Activated CD4-positive, alpha-beta memory T cell treated with anti-CD3 and anti-CD28 coated beads for 36 hours (primary cell): ENCODE measurements at regions of chr11 and their contacts with region 1.

Region 1: DNA sequence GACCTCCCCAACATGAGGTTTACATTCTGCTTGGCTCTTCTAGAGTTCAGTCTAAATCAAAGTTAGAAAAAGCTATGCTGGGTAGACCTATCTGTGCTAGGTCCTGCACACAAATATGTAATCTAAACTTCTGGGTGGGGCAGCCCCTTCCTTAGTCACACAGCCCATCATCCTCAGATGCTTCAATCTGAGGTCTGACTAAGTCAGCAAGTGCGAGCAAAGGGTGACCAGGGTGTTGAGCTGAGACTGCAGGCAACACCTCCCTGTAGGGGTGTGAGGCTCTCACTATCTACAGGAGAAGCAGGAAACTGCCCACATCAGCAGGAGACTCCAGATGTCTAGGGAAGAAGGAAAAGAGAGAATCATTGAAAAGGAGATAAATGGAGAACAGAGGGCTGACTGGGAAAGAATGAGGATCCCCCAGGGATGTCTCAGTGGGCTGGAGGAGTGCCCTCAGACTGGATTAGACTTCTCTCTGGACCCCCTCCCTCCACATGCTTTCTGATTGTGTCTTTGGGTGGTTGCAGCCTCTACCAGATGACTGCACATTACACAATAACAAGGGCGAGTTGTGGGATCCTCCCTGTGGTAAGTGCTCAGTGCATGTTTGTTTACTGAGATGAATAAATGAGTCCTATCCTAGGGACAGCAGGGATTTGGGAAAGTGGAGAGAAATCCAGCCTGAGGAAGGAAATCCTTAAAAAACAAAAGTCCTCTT is 266.2 kb upstream of the PLET1 start:
- DNase-seq: peak; percentile 54
- H3K4me3 Mint-ChIP-seq: no peak overlapping the region
- H3K27ac Mint-ChIP-seq: no peak overlapping the region
- H3K4me1 Mint-ChIP-seq: peaks cover 21% of the 10 kb centered on the region
- H3K27me3 Mint-ChIP-seq: peaks cover 3% of the 10 kb centered on the region

Region 2: DNA sequence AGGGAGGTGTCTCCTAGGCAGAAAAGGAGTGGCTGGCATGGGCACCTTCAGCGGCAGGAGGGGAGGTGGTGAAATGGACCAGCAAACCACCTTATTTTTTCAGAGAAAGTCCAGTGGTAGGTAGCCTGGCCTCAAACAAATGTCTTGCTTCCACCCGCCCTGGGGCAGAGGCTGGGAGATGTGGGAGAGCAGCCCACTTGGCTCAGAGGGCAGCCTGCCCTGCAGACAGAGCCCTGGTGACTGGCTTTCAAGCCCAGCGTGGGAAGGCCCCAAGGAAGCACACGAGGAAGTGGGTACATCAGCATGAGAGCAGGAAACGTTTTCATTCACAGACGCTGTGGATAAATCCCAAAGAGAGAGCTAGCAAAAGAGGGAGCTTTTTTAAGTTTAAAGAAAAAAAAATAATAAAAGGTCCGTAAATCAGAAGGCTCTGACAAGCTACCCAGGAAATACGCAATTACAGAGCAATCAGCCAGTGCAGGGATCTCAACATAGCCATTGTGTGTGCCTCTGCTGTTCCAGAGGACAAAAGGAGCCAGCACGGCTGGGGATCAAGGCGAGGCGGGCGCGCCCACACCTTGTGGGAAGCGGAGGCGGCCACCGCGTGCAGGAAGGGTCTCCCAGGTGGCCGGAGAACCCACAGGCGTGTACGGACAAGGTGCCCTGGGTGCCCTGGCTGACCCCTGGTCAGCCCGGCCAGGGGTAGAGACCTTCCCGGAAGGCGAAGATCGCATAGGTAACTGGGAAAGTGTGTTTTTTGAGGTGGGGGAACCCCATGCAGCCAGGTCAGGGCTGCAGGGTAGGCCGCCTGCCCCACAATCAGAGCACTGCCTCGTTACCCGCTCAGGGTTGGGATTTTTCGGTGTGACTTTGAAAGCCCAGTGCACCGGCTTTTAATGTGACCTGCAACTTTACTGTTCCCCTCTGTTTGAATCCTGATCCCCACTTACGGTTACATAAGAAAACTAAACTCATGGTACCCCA is 27.3 kb before region 1 on chr11:
- CTCF ChIA-PET with region 1: no interaction called
- POLR2A ChIA-PET with region 1: no interaction called
- intact Hi-C with region 1: no loop called
- DNase-seq: no peak
- H3K4me3 Mint-ChIP-seq: no peak overlapping the region
- H3K27ac Mint-ChIP-seq: no peak overlapping the region
- H3K4me1 Mint-ChIP-seq: no peaks in the 10 kb centered on the region
- H3K27me3 Mint-ChIP-seq: no peaks in the 10 kb centered on the region

Region 3: DNA sequence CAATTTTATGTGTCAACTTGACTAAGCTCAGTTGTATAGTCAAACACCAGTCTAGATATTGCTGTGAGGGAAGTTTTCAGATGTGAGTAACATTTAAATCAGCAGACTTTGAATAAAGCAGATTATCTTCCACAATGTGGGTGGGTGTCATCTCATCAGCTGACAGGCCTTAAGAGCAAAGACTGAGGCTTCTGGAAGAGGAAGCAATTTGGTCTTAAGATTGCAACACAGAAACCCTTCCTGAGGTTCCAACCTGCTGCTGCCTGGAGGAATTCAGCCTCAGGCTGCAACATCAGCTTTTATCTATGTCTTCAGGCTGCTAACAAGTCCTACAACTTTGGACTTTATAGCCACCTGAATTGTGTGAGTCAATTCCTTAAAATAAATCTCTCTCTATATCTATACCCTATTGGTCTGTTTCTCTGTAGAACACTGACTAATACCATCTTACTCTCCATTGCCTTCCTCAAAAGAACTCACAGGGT is 11.0 kb after region 1 on chr11:
- CTCF ChIA-PET with region 1: interaction called, 4 read pairs
- POLR2A ChIA-PET with region 1: no interaction called
- intact Hi-C with region 1: loop called (anchors 1 kb)
- DNase-seq: no peak
- H3K4me3 Mint-ChIP-seq: no peak overlapping the region
- H3K27ac Mint-ChIP-seq: no peak overlapping the region
- H3K4me1 Mint-ChIP-seq: peaks cover 42% of the 10 kb centered on the region
- H3K27me3 Mint-ChIP-seq: peaks cover 5% of the 10 kb centered on the region